Prostate gland (tissue), 2 donors: ENCODE measurements at regions of chr10 and their contacts with region 1.

Region 1: GRCh38 chr10:91389636-91390512 is 20.3 kb upstream of the HECTD2 start:
- DNase-seq: peak; percentile 36
- H3K4me3 ChIP-seq: no peak overlapping the region
- H3K27ac ChIP-seq: no peak overlapping the region
- H3K4me1 ChIP-seq: peaks cover 2% of the 10 kb centered on the region
- H3K27me3 ChIP-seq: no peaks in the 10 kb centered on the region
- CTCF ChIP-seq: peak; percentile 67 to 82 (median 74)
- POLR2A ChIP-seq: no peak

Region 2: GRCh38 chr10:91117505-91117904 is 272.4 kb before region 1 on chr10:
- intact Hi-C with region 1: no loop called
- DNase-seq: no peak
- H3K4me3 ChIP-seq: no peak overlapping the region
- H3K27ac ChIP-seq: no peak overlapping the region
- H3K4me1 ChIP-seq: no peaks in the 10 kb centered on the region
- H3K27me3 ChIP-seq: no peaks in the 10 kb centered on the region
- CTCF ChIP-seq: no peak
- POLR2A ChIP-seq: no peak

Region 3: GRCh38 chr10:91551856-91552255 is 162.0 kb after region 1 on chr10:
- intact Hi-C with region 1: loop called (anchors 5 kb)
- DNase-seq: no peak
- H3K4me3 ChIP-seq: no peak overlapping the region
- H3K27ac ChIP-seq: no peak overlapping the region
- H3K4me1 ChIP-seq: peaks cover 7% of the 10 kb centered on the region
- H3K27me3 ChIP-seq: no peaks in the 10 kb centered on the region
- CTCF ChIP-seq: peak in 3 of 4 experiments; percentile 36 to 64 (median 53)
- POLR2A ChIP-seq: no peak